IMR-90 (cell line): ENCODE measurements at regions of chr14 and their contacts with region 1.

Region 1: DNA sequence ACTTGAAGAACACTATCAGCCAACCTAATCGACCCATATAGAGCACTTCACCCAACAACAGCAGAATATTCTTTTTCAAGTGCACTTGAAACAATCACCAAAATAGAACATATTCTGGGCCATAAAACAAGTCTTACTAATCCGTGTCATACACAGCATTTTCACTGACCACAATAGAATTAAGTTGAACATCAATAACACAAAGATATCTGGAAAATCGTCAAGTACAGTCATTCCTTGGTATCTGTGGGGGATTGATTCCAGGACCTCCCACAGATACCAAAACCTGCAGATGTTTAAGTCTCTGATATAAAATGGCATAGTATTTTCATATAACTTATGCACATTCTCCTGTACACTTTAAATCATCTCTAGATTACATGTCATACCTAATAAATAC is 295.7 kb downstream of the BCL11B start:
- DNase-seq: no peak
- ATAC-seq: no peak
- H3K4me3 ChIP-seq: no peak overlapping the region
- H3K27ac ChIP-seq: no peak overlapping the region
- H3K4me1 ChIP-seq: no peaks in the 10 kb centered on the region
- H3K27me3 ChIP-seq: no peaks in the 10 kb centered on the region
- CTCF ChIP-seq: no peak
- POLR2A ChIP-seq: no peak
- RAD21 ChIP-seq: no peak

Region 2: DNA sequence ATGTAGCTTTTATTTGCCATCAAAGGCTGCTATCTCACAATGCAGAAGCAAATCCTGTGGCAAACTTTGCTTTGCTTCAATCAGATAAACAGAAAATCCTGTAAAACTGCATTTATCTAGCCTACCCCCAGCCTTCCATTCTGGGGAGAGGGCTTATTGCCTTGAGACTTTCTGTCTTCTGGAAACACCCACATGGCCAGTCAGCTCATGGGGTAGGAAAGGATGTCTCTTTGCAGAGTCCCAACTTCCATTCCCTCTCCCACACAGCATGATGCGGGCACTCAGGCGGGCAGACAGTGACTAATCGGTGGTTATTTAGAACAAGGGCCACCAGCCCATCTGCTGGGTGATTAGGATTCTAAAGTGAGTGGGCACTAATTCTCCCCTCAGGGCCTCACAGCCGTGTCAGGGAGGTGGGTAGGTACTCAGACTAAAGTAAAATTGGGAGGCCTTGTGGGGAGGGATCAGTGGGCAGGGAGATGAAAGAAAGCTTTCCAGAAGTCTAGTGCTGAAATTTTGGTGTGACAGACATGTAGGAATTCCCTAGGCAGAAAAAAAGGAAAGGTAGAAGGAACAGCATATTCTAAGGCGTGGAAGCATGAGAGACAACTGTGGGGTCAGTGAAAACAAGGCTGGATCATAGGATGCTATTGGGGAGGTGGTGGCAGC is 1458.6 kb before region 1 on chr14:
- CTCF ChIA-PET with region 1: no interaction called
- POLR2A ChIA-PET with region 1: no interaction called
- dilution Hi-C with region 1: no loop called
- in situ Hi-C with region 1: no loop called
- intact Hi-C with region 1: loop called (anchors 5 kb)
- DNase-seq: no peak
- ATAC-seq: no peak
- H3K4me3 ChIP-seq: no peak overlapping the region
- H3K27ac ChIP-seq: no peak overlapping the region
- H3K4me1 ChIP-seq: no peaks in the 10 kb centered on the region
- H3K27me3 ChIP-seq: no peaks in the 10 kb centered on the region
- CTCF ChIP-seq: no peak
- POLR2A ChIP-seq: no peak
- RAD21 ChIP-seq: no peak